ENCODE measurements at regions of chr22 and their contacts with region 1.

Region 1: DNA sequence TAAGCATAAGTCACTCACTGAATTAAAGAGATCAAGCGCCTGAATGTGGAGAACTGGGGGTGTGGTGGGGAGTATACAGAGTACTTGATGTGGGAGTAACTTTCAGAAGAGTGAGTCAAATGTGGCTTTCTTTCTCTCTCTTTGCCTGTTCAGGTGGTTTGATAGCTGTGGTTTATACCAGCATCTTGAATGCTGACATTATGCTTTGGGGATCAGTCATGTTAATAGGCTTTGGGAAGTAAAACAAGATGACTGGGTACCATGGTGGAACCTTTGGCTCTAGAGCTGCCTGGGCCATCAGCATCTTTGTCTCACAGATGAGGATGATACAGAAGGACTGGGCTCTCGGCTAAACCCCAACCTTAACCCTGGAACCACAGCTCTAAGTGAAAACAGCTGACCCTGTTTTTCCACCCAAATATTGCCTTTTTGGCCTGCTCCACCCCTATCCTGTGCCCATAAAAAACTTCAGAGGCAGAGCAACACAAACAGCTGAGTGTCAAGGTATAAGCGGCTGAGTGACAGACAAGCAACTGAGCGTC is 58.2 kb upstream of the GNAZ start:
- DNase-seq: peak; percentile 69
- H3K4me3 Mint-ChIP-seq: no peak overlapping the region
- H3K27ac Mint-ChIP-seq: peak overlapping the region; percentile 48
- H3K4me1 Mint-ChIP-seq: peaks cover 26% of the 10 kb centered on the region
- H3K27me3 Mint-ChIP-seq: peaks cover 43% of the 10 kb centered on the region

Region 2: DNA sequence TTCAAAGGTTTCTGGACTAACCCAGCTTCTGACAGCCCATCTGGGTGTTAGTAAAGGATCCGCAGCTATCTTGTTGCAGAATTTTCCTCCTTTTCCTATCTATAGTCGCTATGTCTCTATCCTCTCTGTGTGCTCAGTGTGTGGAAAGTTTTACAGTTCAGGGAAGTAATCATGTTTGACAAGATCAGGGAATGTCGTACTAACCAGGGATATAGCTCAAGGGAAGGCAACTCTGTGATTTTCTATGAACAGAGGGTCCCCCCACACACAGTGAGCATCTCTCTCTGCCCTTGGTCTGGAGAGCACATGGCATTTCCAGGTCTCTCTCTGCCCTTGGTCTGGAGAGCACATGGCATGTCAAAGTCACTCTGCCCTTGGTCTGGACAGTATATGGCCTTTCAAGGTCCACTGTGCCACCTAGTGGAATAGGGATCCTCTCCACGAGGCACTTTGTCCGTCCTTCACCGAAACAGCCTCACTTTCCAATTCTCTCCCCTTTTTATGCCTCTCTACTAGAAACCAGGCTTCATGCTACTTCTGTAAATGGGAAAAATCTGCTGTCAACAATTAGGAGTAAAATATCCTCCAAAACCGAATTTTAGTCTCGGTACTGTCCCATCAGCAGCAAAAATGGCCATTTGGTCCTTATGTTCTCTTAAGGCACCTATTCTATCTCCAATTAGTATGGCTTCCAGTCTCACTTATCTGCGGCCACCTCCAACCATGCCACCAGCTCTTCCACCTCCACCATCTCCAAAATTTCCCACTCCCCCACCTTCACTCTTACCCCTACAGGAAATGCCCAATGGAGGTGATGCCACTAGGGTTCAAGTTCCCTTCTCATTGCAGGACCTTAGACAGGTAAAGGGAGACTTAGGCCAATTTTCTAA is 35.9 kb before region 1 on chr22:
- CTCF ChIA-PET with region 1: no interaction called
- intact Hi-C with region 1: no loop called
- DNase-seq: no peak
- H3K4me3 Mint-ChIP-seq: no peak overlapping the region
- H3K27ac Mint-ChIP-seq: no peak overlapping the region
- H3K4me1 Mint-ChIP-seq: no peaks in the 10 kb centered on the region
- H3K27me3 Mint-ChIP-seq: peaks cover 22% of the 10 kb centered on the region

Region 3: GRCh38 chr22:23023294-23023693 is 11.1 kb after region 1 on chr22:
- CTCF ChIA-PET with region 1: no interaction called
- intact Hi-C with region 1: no loop called
- DNase-seq: no peak
- H3K4me3 Mint-ChIP-seq: no peak overlapping the region
- H3K27ac Mint-ChIP-seq: no peak overlapping the region
- H3K4me1 Mint-ChIP-seq: no peaks in the 10 kb centered on the region
- H3K27me3 Mint-ChIP-seq: no peaks in the 10 kb centered on the region

Region 4: GRCh38 chr22:23036684-23037428 is 24.7 kb after region 1 on chr22:
- CTCF ChIA-PET with region 1: interaction called, 5 read pairs
- intact Hi-C with region 1: loop called (anchors 1 kb)
- DNase-seq: peak; percentile 15
- H3K4me3 Mint-ChIP-seq: no peak overlapping the region
- H3K27ac Mint-ChIP-seq: no peak overlapping the region
- H3K4me1 Mint-ChIP-seq: peaks cover 13% of the 10 kb centered on the region
- H3K27me3 Mint-ChIP-seq: peaks cover 9% of the 10 kb centered on the region